ENCODE measurements at regions of chr1 and their contacts with region 1.

Region 1: DNA sequence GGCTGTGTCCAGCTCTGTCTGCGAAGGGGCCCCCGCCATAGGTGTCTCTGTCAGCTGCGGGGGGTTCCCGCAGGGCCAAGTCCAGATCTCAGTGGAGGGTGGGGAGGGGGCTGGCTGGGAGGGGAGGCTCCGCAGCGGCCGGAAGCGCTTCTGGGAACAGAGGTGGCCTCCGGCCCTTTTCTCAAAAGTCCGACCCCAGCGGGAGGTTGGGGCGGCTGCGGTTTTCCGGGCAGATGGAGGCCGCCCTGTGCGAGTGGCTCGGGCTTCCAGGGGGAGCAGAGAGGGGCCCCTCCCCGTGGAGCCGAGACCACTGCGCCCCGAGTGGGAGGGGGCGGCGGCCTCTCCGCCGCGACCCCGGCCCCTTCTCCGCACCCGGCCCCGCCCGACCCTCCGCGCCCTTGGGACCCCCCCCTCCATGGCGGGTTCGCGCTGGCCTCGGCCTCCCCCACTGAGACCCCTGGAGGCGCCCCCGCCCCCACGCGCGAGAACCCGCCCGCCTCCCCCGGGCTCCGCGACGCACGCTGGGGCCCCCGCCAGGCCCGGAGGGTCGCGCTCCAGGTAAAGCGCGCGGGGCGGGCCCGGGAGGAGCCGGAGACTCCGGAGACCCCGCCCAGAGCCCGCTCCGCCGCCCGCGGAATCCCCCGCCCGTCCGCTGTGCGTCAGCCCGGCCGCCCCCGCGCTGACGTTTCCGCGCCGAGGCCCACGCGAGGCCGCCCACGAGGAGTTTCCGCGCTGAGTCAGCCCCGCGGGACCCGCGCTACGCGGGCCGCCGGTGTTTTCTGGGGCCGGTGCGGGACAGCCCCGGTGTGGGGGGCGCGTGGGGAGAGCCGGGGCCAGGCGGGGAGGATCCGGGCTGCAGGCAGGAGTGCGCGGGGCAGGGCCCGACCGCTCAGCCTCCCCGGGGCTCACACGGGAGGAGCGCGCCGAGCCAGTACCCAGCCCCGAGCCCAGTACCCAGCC is 5.3 kb downstream of the TNFRSF18 start:
- DNase-seq: peak; percentile 88
- ATAC-seq: peak; percentile 82
- H3K4me3 Mint-ChIP-seq: peak overlapping the region; percentile 57
- H3K27ac Mint-ChIP-seq: peak overlapping the region; percentile 78
- H3K4me1 Mint-ChIP-seq: peaks cover 12% of the 10 kb centered on the region
- H3K27me3 Mint-ChIP-seq: no peaks in the 10 kb centered on the region
- CTCF ChIP-seq: no peak

Region 2: GRCh38 chr1:832136-832535 is 369.0 kb before region 1 on chr1:
- CTCF ChIA-PET with region 1: no interaction called
- POLR2A ChIA-PET with region 1: no interaction called
- intact Hi-C with region 1: no loop called
- DNase-seq: no peak
- ATAC-seq: no peak
- H3K4me3 Mint-ChIP-seq: no peak overlapping the region
- H3K27ac Mint-ChIP-seq: no peak overlapping the region
- H3K4me1 Mint-ChIP-seq: peaks cover 19% of the 10 kb centered on the region
- H3K27me3 Mint-ChIP-seq: no peaks in the 10 kb centered on the region
- CTCF ChIP-seq: no peak

Region 3: DNA sequence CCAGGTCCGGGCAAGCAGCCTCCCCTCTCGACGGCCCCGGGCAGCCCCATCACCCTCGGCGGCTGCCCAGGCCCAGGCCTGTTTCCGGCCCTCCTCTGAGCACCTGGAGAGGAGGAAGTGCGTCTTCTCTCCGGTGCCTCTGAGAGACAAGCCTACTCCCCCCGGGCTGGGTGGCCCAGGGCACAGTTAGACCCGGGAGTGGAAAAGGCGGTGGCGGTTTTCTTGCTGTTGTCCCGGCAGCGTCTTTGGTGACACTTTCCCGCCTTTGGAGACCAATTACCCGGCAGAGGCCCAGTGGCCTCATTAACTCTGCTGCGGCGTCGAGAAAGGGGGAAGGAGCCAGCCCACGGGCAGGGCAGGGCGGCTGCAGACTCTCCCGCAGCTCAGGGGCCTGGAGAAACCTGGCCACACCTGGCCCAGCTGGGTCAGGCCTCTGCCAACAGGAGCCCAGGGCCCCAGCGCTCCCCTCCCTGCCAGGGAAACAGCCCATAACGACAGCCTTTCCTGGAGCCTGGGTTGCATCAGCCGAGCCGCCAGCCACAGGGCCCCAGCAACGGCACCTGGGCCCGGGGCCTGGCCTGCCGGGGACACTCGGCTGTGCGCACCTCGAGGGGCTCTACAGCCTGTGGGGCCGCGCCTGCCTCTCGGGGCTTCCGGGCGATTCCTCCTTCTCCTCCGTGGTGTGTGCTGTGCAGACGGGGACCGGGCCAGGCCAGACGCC is 56.8 kb before region 1 on chr1:
- CTCF ChIA-PET with region 1: no interaction called
- POLR2A ChIA-PET with region 1: no interaction called
- intact Hi-C with region 1: loop called (anchors 10 kb)
- DNase-seq: peak; percentile 88
- ATAC-seq: peak; percentile 91
- H3K4me3 Mint-ChIP-seq: peak overlapping the region; percentile 60
- H3K27ac Mint-ChIP-seq: peak overlapping the region; percentile 92
- H3K4me1 Mint-ChIP-seq: peaks cover 23% of the 10 kb centered on the region
- H3K27me3 Mint-ChIP-seq: no peaks in the 10 kb centered on the region
- CTCF ChIP-seq: no peak

Measured in activated CD8-positive, alpha-beta T cell treated with anti-CD3 and anti-CD28 coated beads for 36 hours (primary cell).